Dendritic cell treated with granulocyte-macrophage colony-stimulating factor and Interleukin-4, amounts not matched to agents 40 ng/mL and 50 ng/mL, for 4 days (primary cell): ENCODE measurements at regions of chr7 and their contacts with region 1.

Region 1: GRCh38 chr7:55593515-55594318 is 21.4 kb upstream of the VOPP1 start:
- H3K4me3 Mint-ChIP-seq: no peak overlapping the region
- H3K27ac Mint-ChIP-seq: peak overlapping the region; percentile 20
- H3K4me1 Mint-ChIP-seq: peaks cover 43% of the 10 kb centered on the region
- H3K27me3 Mint-ChIP-seq: peaks cover 33% of the 10 kb centered on the region

Region 2: DNA sequence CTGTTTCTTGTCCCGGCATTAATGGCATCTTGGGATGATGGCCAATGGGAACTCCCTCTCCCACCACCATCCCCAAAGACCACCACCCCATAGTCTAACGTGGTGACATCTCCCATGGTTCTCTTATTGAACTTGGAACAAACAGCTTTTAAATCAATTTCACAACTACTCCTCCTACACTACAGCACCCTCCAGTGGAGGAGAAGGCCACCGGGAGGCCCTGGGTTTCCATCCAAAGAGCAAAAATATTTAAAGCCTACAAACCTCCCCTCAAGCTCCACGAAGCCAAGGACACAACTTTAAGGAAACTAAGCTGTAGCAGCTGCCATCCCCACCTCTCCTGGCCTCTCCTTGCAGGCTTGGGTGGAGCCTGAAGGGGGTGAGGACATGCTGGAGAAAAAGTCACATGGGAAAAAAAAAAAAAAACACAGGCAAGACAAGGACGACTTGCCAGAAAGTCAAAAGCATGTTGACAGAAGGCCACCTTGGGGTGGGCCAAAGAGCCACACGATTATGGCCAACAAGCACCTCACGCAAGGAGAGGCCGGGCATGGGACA is 322.6 kb before region 1 on chr7:
- intact Hi-C with region 1: loop called (anchors 10 kb)
- H3K4me3 Mint-ChIP-seq: no peak overlapping the region
- H3K27ac Mint-ChIP-seq: no peak overlapping the region
- H3K4me1 Mint-ChIP-seq: no peaks in the 10 kb centered on the region
- H3K27me3 Mint-ChIP-seq: no peaks in the 10 kb centered on the region

Region 3: GRCh38 chr7:55432939-55433784 is 160.6 kb before region 1 on chr7:
- intact Hi-C with region 1: loop called (anchors 10 kb)
- H3K4me3 Mint-ChIP-seq: no peak overlapping the region
- H3K27ac Mint-ChIP-seq: no peak overlapping the region
- H3K4me1 Mint-ChIP-seq: no peaks in the 10 kb centered on the region
- H3K27me3 Mint-ChIP-seq: no peaks in the 10 kb centered on the region